ENCODE measurements at regions of chr14 and their contacts with region 1.

Region 1: GRCh38 chr14:39716987-39717570 is 284.8 kb upstream of the FBXO33 start:
- DNase-seq: no peak
- H3K4me3 ChIP-seq: no peak overlapping the region
- H3K27ac ChIP-seq: no peak overlapping the region
- H3K4me1 ChIP-seq: peaks cover 0 to 4% (median 0%) of the 10 kb centered on the region in 4 experiments; a peak in 1 of 7 replicates
- H3K27me3 ChIP-seq: no peaks in the 10 kb centered on the region
- CTCF ChIP-seq: no peak
- EP300 ChIP-seq: no peak
- POLR2A ChIP-seq: no peak
- RAD21 ChIP-seq: no peak

Region 2: DNA sequence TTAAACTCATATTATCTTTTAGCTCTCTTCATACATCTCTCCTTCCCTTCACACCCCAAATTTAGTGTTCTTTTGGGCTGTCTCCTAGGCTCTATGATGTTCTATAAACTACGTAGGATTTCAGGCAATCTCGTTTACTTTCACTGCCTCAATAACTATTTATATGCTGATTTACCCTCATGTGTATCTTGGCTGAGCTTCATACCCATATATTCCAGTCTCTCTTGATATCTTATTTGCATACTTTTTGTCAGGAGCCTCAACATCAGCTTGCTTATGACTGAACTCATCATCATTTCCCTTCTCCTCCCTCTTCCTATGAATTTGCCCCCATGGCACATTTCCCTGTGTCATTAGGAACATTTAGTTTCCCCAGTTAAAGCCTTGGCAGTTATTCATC is 22.7 kb before region 1 on chr14:
- CTCF ChIA-PET with region 1: no interaction called
- POLR2A ChIA-PET with region 1: no interaction called
- DNase-seq: no peak
- H3K4me3 ChIP-seq: no peak overlapping the region
- H3K27ac ChIP-seq: no peak overlapping the region
- H3K4me1 ChIP-seq: no peaks in the 10 kb centered on the region
- H3K27me3 ChIP-seq: no peaks in the 10 kb centered on the region
- CTCF ChIP-seq: no peak
- EP300 ChIP-seq: no peak
- POLR2A ChIP-seq: no peak
- RAD21 ChIP-seq: no peak

Region 3: GRCh38 chr14:39731912-39732311 is 14.8 kb after region 1 on chr14:
- CTCF ChIA-PET with region 1: interaction called, 11 read pairs
- POLR2A ChIA-PET with region 1: no interaction called
- DNase-seq: no peak
- H3K4me3 ChIP-seq: no peak overlapping the region
- H3K27ac ChIP-seq: no peak overlapping the region
- H3K4me1 ChIP-seq: no peaks in the 10 kb centered on the region
- H3K27me3 ChIP-seq: no peaks in the 10 kb centered on the region
- CTCF ChIP-seq: peak in 1 of 3 experiments; percentile 69; a peak in 2 of 4 replicates
- EP300 ChIP-seq: no peak
- POLR2A ChIP-seq: no peak
- RAD21 ChIP-seq: peak; percentile 20 to 42; a peak in 3 of 4 replicates

Measured in H1 (cell line).